Activated naive CD4-positive, alpha-beta T cell treated with anti-CD3 and anti-CD28 coated beads for 36 hours (primary cell): ENCODE measurements at regions of chr1 and their contacts with region 1.

Region 1: DNA sequence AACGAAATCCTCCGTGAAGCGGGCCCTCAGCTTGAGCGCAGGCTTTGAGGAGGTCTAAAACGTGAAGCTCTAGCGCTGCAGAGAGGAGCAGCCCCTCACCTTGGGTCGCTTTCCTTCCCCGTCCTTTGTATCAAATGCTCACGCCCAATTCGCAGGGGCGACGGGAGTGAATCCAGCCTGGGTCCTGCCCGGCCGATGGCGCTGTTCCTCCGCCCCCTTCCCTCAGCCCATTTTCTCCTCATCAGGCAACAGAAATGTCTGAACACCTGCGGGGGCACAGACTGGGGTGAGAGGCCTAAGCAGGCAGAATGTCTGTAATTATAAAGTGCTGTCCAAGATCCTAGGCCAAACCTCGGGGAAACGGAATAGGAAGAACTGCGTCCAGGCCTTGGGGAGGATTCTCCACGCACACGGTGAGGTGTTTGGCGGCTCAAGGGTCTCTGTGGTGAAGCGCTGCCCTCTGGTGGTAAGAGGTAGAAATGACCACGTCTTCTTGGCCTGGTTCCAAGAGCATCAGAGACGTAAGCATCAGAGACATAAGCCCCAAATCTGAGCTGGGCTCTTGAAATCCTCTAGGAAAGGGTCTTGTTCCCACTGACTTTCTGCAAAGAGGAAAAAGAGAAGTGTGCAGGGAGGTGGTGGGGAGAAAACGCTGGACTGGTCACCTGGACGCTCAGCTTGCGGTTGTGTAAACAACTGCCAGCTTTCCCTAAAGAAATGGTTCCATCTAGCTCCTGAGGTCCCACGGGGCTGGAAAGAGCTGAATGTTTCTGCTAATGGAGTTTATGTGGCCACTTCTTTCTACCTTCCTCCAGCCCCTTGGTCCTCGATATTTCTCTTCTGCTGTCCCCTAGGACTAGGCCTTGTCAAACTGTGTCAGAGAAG is 92.1 kb upstream of the CD53 start:
- DNase-seq: peak; percentile 89
- H3K4me3 Mint-ChIP-seq: peak overlapping the region; percentile 27
- H3K27ac Mint-ChIP-seq: no peak overlapping the region
- H3K4me1 Mint-ChIP-seq: peaks cover 24% of the 10 kb centered on the region
- H3K27me3 Mint-ChIP-seq: no peaks in the 10 kb centered on the region

Region 2: DNA sequence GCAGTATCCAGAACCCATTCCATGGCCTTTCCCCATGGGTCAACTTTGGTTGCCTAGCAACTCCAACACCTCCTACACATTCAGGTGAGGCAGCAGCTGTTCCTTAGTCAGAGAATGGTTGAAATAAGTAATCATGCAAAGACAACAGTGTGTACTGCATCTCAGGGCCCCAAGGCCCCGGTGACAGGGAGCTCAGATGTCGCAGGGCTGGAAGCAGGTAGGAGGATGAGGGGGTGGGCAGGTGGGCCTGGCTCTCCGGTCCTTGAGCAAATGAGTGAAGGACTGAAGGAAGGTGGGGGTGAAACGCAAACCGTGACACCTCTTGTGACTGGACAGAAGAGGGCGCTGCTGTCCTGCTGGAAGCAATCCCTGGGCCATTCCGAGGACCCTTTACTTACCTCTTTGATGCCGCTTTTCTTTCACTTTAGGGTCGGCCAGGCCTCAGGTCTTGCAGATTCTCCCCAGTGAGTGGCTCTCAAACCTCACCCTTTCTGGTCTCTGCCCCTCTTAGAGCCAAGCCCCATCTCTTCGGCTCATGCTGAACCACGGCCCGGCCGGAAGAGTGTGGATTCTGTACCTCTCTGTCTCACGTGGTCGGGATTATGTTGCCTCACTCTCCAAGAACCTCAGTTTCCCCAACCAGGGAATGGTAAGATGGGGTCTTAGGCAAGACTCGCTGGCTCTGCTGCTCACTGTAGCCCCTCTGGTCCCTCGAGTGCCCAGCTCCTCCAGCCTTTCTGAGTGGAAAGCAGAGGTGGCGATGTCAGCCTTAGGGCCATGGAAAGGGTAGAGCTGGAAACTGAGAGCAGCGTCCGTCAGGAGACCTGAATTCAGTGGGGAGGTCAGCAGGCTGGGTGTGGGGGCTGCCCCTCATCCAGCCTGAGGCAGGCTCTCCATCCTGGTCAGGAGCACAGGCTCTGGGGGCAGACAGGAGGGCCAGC is 256.3 kb before region 1 on chr1:
- CTCF ChIA-PET with region 1: interaction called, 105 read pairs
- intact Hi-C with region 1: loop called (anchors 1 kb)
- DNase-seq: peak; percentile 70
- H3K4me3 Mint-ChIP-seq: no peak overlapping the region
- H3K27ac Mint-ChIP-seq: no peak overlapping the region
- H3K4me1 Mint-ChIP-seq: no peaks in the 10 kb centered on the region
- H3K27me3 Mint-ChIP-seq: peaks cover 12% of the 10 kb centered on the region

Region 3: DNA sequence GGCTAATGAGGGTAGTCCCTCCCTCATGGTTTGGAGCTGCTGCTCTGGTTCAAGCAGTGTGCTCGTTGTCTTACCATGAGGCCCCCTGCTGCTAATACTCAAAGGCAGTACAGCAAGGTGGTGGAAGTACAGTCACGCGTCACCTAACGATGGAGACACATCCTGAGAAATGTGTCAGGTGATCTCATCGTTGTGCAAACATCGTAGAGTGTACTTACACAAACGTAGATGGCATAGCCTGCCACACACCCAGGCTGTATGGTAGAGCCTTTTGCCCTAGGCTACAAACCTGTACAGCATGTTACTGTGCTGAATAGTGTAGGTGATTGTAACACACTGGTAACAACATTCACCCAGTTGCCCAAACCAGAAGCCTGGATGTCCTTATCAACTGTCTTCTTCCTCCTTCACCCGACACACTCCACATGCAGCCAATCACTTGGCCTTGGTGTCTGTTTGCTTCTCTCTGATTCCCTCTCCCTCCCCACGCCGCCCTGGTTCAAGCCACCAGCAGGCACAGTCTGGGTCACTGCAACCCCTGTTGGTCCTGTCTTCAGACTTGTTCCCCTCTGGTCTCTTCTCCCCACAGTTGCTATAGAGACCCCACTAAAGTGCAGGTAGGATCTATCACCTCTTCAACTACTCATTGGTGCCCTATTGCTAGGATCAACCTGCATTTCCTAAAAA is 168.6 kb before region 1 on chr1:
- CTCF ChIA-PET with region 1: interaction called, 194 read pairs
- intact Hi-C with region 1: no loop called
- DNase-seq: no peak
- H3K4me3 Mint-ChIP-seq: no peak overlapping the region
- H3K27ac Mint-ChIP-seq: no peak overlapping the region
- H3K4me1 Mint-ChIP-seq: peaks cover 9% of the 10 kb centered on the region
- H3K27me3 Mint-ChIP-seq: peaks cover 15% of the 10 kb centered on the region

Region 4: GRCh38 chr1:110645821-110646735 is 134.8 kb before region 1 on chr1:
- CTCF ChIA-PET with region 1: interaction called, 10 read pairs
- intact Hi-C with region 1: no loop called
- DNase-seq: no peak
- H3K4me3 Mint-ChIP-seq: peak overlapping the region; percentile 28
- H3K27ac Mint-ChIP-seq: no peak overlapping the region
- H3K4me1 Mint-ChIP-seq: peaks cover 55% of the 10 kb centered on the region
- H3K27me3 Mint-ChIP-seq: no peaks in the 10 kb centered on the region

Region 5: DNA sequence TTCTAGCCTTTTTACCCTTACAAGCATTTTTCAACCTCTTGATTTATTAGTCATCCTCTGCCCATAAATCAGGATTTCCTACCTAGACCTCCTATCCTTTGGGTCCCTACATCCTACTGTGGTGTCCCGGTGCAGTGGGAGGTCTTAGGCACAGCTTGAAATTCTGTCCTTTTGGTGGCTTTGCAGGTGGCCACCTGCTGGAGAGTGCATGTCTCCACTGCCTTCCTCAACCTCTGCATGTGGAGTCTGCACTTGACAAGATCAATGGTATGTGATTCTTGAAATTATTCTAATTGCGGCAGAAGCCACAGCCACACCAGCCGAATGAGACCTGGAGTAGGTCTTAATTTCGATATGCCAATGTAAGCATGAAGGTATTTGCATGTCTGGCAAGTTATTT is 94.7 kb before region 1 on chr1:
- CTCF ChIA-PET with region 1: no interaction called
- intact Hi-C with region 1: no loop called
- DNase-seq: peak; percentile 19
- H3K4me3 Mint-ChIP-seq: no peak overlapping the region
- H3K27ac Mint-ChIP-seq: no peak overlapping the region
- H3K4me1 Mint-ChIP-seq: peaks cover 12% of the 10 kb centered on the region
- H3K27me3 Mint-ChIP-seq: no peaks in the 10 kb centered on the region

Region 6: GRCh38 chr1:110766025-110766647 is 14.7 kb before region 1 on chr1:
- CTCF ChIA-PET with region 1: interaction called, 103 read pairs
- intact Hi-C with region 1: no loop called
- DNase-seq: peak; percentile 75
- H3K4me3 Mint-ChIP-seq: no peak overlapping the region
- H3K27ac Mint-ChIP-seq: no peak overlapping the region
- H3K4me1 Mint-ChIP-seq: peaks cover 2% of the 10 kb centered on the region
- H3K27me3 Mint-ChIP-seq: peaks cover 2% of the 10 kb centered on the region

Region 7: DNA sequence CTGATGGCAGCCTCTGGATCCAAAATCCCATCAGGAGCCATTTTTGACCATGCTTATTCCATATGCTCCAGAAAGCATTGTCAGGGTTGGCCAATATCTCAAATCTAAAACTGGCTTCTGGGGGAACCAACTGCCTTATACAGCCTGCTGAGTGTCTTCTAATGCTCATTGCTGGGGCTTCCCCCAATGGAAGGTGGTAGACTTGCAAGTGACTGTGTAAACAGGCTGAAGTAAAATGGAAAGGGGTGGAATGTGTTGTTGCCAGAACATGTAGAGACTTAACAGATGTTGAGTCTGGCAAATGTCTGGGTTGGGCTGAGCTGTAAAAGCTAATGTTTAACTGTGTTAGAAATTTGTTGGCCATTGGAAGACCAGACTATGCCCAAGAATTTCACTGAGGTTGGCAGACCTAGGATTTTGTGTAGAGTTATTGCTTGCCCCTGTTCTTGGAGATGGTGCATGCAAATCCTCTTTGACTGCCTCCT is 205.6 kb after region 1 on chr1:
- CTCF ChIA-PET with region 1: interaction called, 62 read pairs
- intact Hi-C with region 1: no loop called
- DNase-seq: peak; percentile 28
- H3K4me3 Mint-ChIP-seq: no peak overlapping the region
- H3K27ac Mint-ChIP-seq: no peak overlapping the region
- H3K4me1 Mint-ChIP-seq: peaks cover 10% of the 10 kb centered on the region
- H3K27me3 Mint-ChIP-seq: peaks cover 5% of the 10 kb centered on the region

Region 8: GRCh38 chr1:111334169-111334568 is 553.3 kb after region 1 on chr1:
- CTCF ChIA-PET with region 1: no interaction called
- intact Hi-C with region 1: loop called (anchors 1 kb)
- DNase-seq: peak; percentile 76
- H3K4me3 Mint-ChIP-seq: no peak overlapping the region
- H3K27ac Mint-ChIP-seq: no peak overlapping the region
- H3K4me1 Mint-ChIP-seq: no peaks in the 10 kb centered on the region
- H3K27me3 Mint-ChIP-seq: no peaks in the 10 kb centered on the region